ENCODE measurements at regions of chr1 and their contacts with region 1.

Region 1: DNA sequence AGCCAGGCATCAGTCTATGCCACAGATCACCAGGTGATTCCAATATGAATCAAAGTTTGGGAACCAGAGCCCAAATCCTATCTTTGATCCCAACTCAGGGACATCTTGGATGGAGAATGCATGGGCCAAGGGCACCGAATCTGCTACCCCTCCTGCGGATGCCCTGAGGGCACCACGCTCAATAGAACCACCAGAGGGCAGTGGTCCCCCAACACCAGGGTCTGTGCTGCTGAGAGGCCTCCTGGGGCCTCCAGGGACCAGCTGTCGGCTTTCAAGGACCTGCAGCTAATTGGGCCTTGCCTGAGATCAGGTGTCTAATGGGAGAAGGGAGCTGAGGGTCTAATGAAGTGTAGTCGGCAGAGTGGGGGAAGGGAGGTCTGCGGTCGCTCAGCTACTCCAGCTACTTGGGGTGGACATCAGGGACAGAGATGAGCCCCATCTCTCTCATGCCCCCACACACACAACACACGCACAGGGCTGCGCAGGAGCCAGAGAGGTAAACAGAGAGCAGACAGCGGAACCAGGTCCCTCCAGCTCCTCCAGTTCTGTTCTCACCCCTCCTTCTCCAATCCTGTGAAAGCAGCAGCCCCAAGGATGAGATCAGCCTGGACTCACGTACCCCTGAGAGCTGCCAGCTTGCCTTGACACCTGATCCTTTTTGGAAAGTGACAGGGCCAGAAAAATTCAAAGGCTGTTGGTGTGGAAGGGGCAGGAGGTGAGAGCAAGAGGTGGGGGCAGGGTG is 34.9 kb upstream of the PPP1R15B start:
- DNase-seq: peak; percentile 34 to 71
- H3K4me3 ChIP-seq: no peak overlapping the region
- H3K4me1 ChIP-seq: no peaks in the 10 kb centered on the region
- H3K27me3 ChIP-seq: no peaks in the 10 kb centered on the region

Region 2: GRCh38 chr1:204296431-204296988 is 150.0 kb before region 1 on chr1:
- in situ Hi-C with region 1: no loop called
- DNase-seq: no peak
- H3K4me3 ChIP-seq: no peak overlapping the region
- H3K4me1 ChIP-seq: no peaks in the 10 kb centered on the region
- H3K27me3 ChIP-seq: peaks cover 45% of the 10 kb centered on the region

Region 3: GRCh38 chr1:204503122-204503912 is 56.8 kb after region 1 on chr1:
- in situ Hi-C with region 1: loop called (anchors 5 kb)
- DNase-seq: peak; percentile 43 to 67
- H3K4me3 ChIP-seq: no peak overlapping the region
- H3K4me1 ChIP-seq: peaks cover 2% of the 10 kb centered on the region; the same call in 1 of the 2 replicates
- H3K27me3 ChIP-seq: no peaks in the 10 kb centered on the region

Region 4: GRCh38 chr1:204578867-204579664 is 132.5 kb after region 1 on chr1:
- in situ Hi-C with region 1: no loop called
- DNase-seq: peak; percentile 8 to 60
- H3K4me3 ChIP-seq: no peak overlapping the region
- H3K4me1 ChIP-seq: peaks cover 13% of the 10 kb centered on the region
- H3K27me3 ChIP-seq: no peaks in the 10 kb centered on the region